ENCODE measurements at regions of chr7 and their contacts with region 1.

Region 1: DNA sequence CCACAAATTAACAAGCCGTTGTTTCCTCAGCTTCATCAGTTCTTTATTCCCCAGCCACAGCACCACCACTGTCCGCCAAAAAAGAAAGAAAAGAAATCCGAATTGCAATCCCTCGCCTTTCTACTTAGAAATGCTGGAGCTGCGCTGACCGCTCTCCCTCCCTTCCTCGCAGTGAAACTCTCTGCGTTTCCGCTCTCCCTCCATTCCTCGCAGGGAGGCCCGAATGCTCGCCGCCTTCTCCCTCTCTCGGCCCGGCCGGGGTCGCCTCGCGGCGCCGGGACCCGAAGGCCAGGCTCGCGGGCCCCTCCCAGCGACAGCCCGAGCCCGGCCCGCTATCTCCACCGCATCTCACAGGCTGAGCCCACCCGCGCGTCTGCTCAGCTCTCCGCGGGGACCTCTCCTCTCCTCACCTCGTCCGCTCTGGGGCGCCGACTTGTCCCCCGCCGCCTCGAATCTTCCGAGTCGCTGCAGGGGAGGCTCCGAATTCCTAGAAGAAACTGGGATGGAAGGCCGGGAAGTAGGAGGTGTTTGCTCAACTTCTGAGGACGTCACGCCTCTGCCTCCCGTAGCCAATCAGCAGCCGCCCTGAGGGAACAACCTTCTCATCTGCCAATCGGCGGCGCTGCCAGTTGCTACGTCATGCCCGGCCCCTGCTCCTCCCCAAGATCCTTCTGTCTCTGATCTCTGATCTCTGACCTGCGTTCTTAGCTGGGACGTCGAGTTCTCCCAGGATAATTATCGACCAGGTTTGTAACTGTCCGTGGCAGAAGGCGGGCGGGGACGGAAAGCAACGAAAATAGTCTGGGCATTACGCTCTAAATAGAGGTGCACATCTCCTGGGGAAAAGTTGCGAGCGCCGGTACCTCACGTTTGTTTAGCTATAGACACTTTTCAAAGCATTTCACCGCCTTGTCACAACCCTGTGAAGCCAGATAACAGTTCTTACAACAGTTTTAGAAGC is at the start of gene AASS:
- DNase-seq: peak; percentile 86 to 93
- H3K4me3 ChIP-seq: peak within 1 kb of the TSS; percentile 51
- H3K4me3 Mint-ChIP-seq: peak within 1 kb of the TSS; percentile 89
- H3K27ac Mint-ChIP-seq: peak within 1 kb of the TSS; percentile 89
- H3K4me1 ChIP-seq: peaks cover 24% of the 10 kb centered on the region
- H3K4me1 Mint-ChIP-seq: peaks cover 20% of the 10 kb centered on the region
- H3K27me3 ChIP-seq: no peaks in the 10 kb centered on the region
- H3K27me3 Mint-ChIP-seq: no peaks in the 10 kb centered on the region
- CTCF ChIP-seq: no peak
- total RNA-seq, gene AASS: 11.3 and 14.0 TPM in 2 replicates

Region 2: DNA sequence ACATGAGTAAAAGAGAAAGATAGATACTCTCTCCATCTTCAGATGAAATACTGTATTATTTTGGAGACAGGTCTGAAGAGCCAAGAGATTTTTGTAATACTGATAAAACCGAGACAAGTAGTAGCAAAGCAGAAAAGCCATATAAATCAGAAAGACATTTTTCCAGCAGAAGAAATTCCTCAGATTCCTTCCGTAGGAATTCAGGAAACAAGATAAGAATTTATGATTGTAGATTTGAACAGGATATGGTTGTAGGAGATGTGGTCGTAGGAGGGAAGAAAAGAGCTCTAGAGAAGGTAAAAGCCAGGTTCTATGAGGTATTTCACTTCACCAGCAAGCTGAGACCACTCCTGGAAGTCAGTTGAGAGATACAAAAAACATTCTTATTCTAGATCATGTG is 17.6 kb after region 1 on chr7:
- CTCF ChIA-PET with region 1: no interaction called
- POLR2A ChIA-PET with region 1: no interaction called
- intact Hi-C with region 1: loop called (anchors 1 kb)
- DNase-seq: peak in 1 of 2 experiments; percentile 10
- H3K4me3 ChIP-seq: no peak overlapping the region
- H3K4me3 Mint-ChIP-seq: peak overlapping the region; percentile 50
- H3K27ac Mint-ChIP-seq: peak overlapping the region; percentile 90
- H3K4me1 ChIP-seq: peaks cover 40% of the 10 kb centered on the region
- H3K4me1 Mint-ChIP-seq: peaks cover 20% of the 10 kb centered on the region
- H3K27me3 ChIP-seq: no peaks in the 10 kb centered on the region
- H3K27me3 Mint-ChIP-seq: no peaks in the 10 kb centered on the region
- CTCF ChIP-seq: no peak

Region 3: DNA sequence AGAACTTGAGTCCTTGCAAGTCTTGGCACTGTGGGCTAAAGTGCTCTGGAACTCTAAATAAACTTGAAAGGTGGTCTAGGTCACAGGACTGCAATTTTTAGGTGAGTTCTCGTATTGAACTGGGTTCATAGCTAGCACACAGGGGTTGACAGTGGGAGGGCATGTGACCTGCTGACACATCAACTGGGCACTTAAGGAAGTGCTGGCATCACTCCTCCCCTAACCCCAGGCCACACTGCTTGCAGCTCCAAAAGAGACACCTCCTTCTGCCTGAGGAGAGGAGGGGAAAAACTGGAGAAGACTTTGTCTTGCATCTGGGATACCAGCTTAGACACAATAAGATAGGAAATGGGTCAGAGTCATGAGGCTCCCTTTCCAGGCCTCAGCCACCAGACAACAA is 38.0 kb after region 1 on chr7:
- CTCF ChIA-PET with region 1: interaction called, 21 read pairs
- POLR2A ChIA-PET with region 1: no interaction called
- intact Hi-C with region 1: no loop called
- DNase-seq: no peak
- H3K4me3 ChIP-seq: no peak overlapping the region
- H3K4me3 Mint-ChIP-seq: no peak overlapping the region
- H3K27ac Mint-ChIP-seq: no peak overlapping the region
- H3K4me1 ChIP-seq: peaks cover 14% of the 10 kb centered on the region; the same call in 1 of the 2 replicates
- H3K4me1 Mint-ChIP-seq: peaks cover 10% of the 10 kb centered on the region
- H3K27me3 ChIP-seq: no peaks in the 10 kb centered on the region
- H3K27me3 Mint-ChIP-seq: no peaks in the 10 kb centered on the region
- CTCF ChIP-seq: no peak

Region 4: GRCh38 chr7:122212754-122213153 is 68.7 kb after region 1 on chr7:
- CTCF ChIA-PET with region 1: no interaction called
- POLR2A ChIA-PET with region 1: no interaction called
- intact Hi-C with region 1: no loop called
- DNase-seq: no peak
- H3K4me3 ChIP-seq: no peak overlapping the region
- H3K4me3 Mint-ChIP-seq: no peak overlapping the region
- H3K27ac Mint-ChIP-seq: no peak overlapping the region
- H3K4me1 ChIP-seq: no peaks in the 10 kb centered on the region
- H3K4me1 Mint-ChIP-seq: no peaks in the 10 kb centered on the region
- H3K27me3 ChIP-seq: no peaks in the 10 kb centered on the region
- H3K27me3 Mint-ChIP-seq: no peaks in the 10 kb centered on the region
- CTCF ChIP-seq: no peak

Measured in Caco-2 (cell line).